ENCODE measurements at regions of chr1 and their contacts with region 1.

Region 1: GRCh38 chr1:68346188-68346808 is 103.5 kb downstream of the RPE65 start:
- DNase-seq: no peak
- H3K4me3 ChIP-seq: no peak overlapping the region
- H3K27ac ChIP-seq: no peak overlapping the region
- H3K4me1 ChIP-seq: peaks cover 0 to 11% (median 7%) of the 10 kb centered on the region in 4 donors
- H3K27me3 ChIP-seq: no peaks in the 10 kb centered on the region
- CTCF ChIP-seq: peak; percentile 45 to 56 (median 54)
- EP300 ChIP-seq: no peak
- POLR2A ChIP-seq: no peak

Region 2: DNA sequence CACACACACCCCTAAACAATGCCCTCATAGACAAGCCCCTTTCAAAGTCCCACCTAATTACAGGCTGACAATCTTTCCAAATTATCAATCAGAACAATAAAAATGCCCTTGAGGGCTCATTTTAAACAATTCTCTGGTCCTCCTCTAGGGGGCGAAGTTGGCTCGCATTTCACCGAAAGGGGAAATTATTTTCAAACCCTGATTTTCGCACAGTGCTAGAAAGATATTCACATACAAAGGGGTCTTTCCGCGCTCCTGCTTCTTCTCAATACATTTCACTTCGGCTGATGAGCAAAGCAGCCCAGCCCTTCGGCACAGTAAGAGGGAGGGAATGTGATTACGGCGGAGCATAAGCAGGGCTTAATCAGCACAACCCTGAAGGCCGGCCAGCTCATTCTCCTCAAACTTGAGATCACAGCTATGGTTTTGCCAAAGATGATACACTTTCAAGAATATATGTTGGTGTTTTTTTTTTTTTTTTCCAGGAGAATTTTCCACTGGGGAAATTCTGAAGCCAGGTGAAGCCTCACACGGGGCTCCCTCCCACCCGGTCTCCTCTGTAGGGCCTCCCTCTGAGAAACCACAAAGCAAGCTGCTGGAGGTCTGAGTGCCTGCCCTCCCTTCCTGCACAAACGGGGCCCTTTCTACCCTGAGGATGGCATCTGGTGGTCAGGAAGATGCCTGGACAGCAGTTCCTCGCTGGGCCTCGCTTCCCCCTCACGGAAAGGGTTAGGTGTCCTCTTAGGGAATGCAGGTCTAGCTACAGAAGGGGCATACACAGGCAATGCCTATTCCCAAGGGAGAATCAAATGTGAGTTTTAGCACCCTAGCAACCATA is 579.9 kb before region 1 on chr1:
- intact Hi-C with region 1: loop called (anchors 10 kb)
- DNase-seq: no peak
- H3K4me3 ChIP-seq: peak overlapping the region; percentile 24 to 50 (median 40)
- H3K27ac ChIP-seq: peak overlapping the region; percentile 54 to 68 (median 64)
- H3K4me1 ChIP-seq: peaks cover 17 to 56% (median 39%) of the 10 kb centered on the region in 4 donors
- H3K27me3 ChIP-seq: no peaks in the 10 kb centered on the region
- CTCF ChIP-seq: peak; percentile 78 to 80 (median 78)
- EP300 ChIP-seq: no peak
- POLR2A ChIP-seq: no peak

Region 3: DNA sequence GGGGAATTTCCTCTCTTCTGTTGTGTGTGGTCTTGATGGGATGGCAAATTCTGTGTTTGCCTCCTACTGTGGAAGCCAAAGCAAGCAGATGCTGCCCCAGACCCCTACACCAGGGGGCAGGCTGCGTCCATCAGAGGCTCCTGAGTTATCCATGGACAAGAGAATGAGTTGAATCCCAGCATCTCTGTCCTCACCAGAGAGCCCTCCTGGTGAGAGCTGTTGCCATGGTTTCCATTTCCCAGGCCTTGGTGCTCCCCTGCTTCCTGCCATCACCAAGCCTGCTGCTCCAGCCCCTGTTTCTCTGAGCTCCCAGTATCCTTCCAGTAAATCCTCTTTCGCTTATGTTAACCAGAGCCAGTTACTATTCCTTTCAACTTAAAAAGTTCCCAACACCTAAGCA is 492.6 kb before region 1 on chr1:
- intact Hi-C with region 1: loop called (anchors 5 kb)
- DNase-seq: no peak
- H3K4me3 ChIP-seq: no peak overlapping the region
- H3K27ac ChIP-seq: no peak overlapping the region
- H3K4me1 ChIP-seq: peaks cover 8 to 27% (median 17%) of the 10 kb centered on the region in 4 donors
- H3K27me3 ChIP-seq: no peaks in the 10 kb centered on the region
- CTCF ChIP-seq: peak; percentile 54 to 70 (median 56)
- EP300 ChIP-seq: no peak
- POLR2A ChIP-seq: no peak

Region 4: GRCh38 chr1:68120136-68120791 is 226.0 kb before region 1 on chr1:
- intact Hi-C with region 1: loop called (anchors 1 kb)
- DNase-seq: peak; percentile 93
- H3K4me3 ChIP-seq: no peak overlapping the region
- H3K27ac ChIP-seq: peak overlapping the region; percentile 70 to 73 (median 72)
- H3K4me1 ChIP-seq: peaks cover 4 to 42% (median 31%) of the 10 kb centered on the region in 4 donors
- H3K27me3 ChIP-seq: no peaks in the 10 kb centered on the region
- CTCF ChIP-seq: peak; percentile 82 to 84 (median 83)
- EP300 ChIP-seq: no peak
- POLR2A ChIP-seq: no peak

Region 5: DNA sequence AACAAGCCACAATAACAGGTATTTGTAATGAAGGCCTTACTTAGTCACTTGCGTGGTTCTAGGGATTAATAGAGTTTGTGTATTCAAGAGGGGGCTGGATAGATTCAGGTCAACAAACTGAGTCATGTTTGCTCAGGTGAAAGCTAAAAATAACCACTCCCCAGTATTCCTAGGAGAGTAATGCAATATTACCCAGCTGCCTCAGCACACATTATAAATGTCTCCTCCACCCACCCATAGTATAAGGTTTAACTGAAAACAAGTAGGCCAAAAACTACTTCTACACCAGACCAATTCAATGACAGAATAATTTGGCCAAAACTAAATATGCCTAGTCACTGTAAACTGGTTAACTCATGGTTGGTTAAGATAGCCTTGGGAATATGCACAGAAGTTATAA is 148.4 kb before region 1 on chr1:
- intact Hi-C with region 1: no loop called
- DNase-seq: no peak
- H3K4me3 ChIP-seq: no peak overlapping the region
- H3K27ac ChIP-seq: peak overlapping the region; percentile 58 to 63 (median 59)
- H3K4me1 ChIP-seq: peaks cover 26 to 84% (median 74%) of the 10 kb centered on the region in 4 donors
- H3K27me3 ChIP-seq: no peaks in the 10 kb centered on the region
- CTCF ChIP-seq: no peak
- EP300 ChIP-seq: no peak
- POLR2A ChIP-seq: no peak

Region 6: DNA sequence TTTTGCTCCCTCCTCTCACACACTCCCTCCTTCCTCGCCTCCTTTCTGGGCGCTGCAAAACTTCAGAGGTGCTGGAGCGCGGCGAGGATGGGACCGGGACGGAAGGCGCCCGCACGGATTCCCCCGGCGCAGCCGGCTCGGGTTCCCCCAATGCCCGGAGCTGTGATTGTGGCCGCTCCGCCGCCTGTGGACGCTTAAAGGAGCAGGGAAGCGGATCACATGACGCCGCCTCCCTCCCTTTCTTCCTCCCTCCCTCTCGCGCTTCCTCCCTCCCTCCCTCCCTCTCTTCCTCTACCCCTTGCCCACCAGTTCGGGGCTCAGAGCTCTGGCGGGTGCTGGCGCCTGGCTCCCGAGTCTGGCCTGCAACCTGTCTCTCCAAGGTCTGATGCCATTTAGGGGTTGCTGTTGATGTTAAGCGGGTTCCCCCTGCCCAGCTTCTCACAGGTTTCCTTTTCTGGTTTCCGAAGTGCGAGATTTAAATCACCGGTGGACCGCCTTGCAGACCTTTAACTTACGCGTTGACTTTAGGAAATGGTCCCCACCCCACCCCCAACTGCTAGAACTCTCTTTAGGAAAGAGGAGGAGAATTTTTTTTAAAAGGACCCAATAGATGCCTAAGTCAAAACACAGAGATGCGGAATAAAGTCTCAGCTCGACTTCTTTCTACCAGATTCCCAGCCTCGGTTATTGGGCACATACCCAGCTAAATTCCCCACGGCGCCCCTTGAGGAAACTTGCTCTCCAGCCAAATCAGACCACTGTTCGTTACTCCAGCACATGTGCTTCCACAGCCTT is 113.7 kb before region 1 on chr1 and contains the start of gene WLS:
- intact Hi-C with region 1: loop called (anchors 5 kb)
- DNase-seq: peak; percentile 93
- H3K4me3 ChIP-seq: peak within 1 kb of the TSS; percentile 80 to 94 (median 80)
- H3K27ac ChIP-seq: peak within 1 kb of the TSS; percentile 94 to 97 (median 96)
- H3K4me1 ChIP-seq: peaks cover 5 to 42% (median 37%) of the 10 kb centered on the region in 4 donors
- H3K27me3 ChIP-seq: no peaks in the 10 kb centered on the region
- CTCF ChIP-seq: peak in 1 of 3 experiments; percentile 18
- EP300 ChIP-seq: no peak
- POLR2A ChIP-seq: peak; percentile 65
- total RNA-seq, gene WLS: 94.8 to 228 (median 163) TPM

Region 7: GRCh38 chr1:68378296-68379084 is 32.2 kb after region 1 on chr1:
- intact Hi-C with region 1: no loop called
- DNase-seq: no peak
- H3K4me3 ChIP-seq: no peak overlapping the region
- H3K27ac ChIP-seq: no peak overlapping the region
- H3K4me1 ChIP-seq: peaks cover 0 to 12% (median 9%) of the 10 kb centered on the region in 4 donors
- H3K27me3 ChIP-seq: no peaks in the 10 kb centered on the region
- CTCF ChIP-seq: no peak
- EP300 ChIP-seq: no peak
- POLR2A ChIP-seq: no peak

Measured in esophagus muscularis mucosa (tissue), 4 donors.